Ovary (tissue), 10 donors: ENCODE measurements at regions of chr11 and their contacts with region 1.

Region 1: DNA sequence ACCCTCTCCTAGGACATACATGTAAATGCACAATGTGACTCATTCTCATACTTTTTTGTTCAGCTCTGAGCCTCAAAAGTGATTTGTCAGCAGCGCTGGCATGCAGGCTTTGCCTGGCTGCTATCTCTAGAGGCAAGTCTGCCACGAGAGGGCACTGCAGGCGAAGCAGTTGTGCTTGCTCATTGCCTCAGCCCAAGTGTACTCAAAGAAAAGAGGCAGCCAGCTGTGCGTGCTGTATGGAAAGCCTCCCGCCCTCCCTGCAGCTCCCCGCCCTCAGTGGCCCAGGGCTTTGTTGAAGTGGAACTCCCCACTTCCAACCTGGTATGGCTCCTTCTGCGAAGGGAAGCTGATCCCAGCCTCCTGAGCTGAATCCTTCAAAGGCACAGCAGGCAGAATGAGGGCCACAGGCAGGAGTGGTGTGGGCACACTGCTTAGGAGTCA is 16.3 kb downstream of the SDHAF2 start:
- DNase-seq: peak; percentile 88 to 92 (median 88)
- H3K4me3 ChIP-seq: no peak overlapping the region
- H3K27ac ChIP-seq: no peak overlapping the region
- H3K4me1 ChIP-seq: peaks cover 2% of the 10 kb centered on the region
- H3K27me3 ChIP-seq: no peaks in the 10 kb centered on the region
- CTCF ChIP-seq: peak; percentile 70 to 72 (median 70)
- EP300 ChIP-seq: no peak
- POLR2A ChIP-seq: no peak

Region 2: GRCh38 chr11:61347916-61348461 is 98.2 kb before region 1 on chr11:
- intact Hi-C with region 1: no loop called
- DNase-seq: peak in 1 of 5 donors; percentile 42
- H3K4me3 ChIP-seq: no peak overlapping the region
- H3K27ac ChIP-seq: no peak overlapping the region
- H3K4me1 ChIP-seq: peaks cover 15% of the 10 kb centered on the region
- H3K27me3 ChIP-seq: no peaks in the 10 kb centered on the region
- CTCF ChIP-seq: no peak
- EP300 ChIP-seq: no peak
- POLR2A ChIP-seq: no peak

Region 3: GRCh38 chr11:61488651-61489291 is 42.5 kb after region 1 on chr11:
- intact Hi-C with region 1: no loop called
- DNase-seq: peak; percentile 64 to 79 (median 72)
- H3K4me3 ChIP-seq: no peak overlapping the region
- H3K27ac ChIP-seq: peak overlapping the region in 1 of 2 donors; percentile 21
- H3K4me1 ChIP-seq: peaks cover 18% of the 10 kb centered on the region
- H3K27me3 ChIP-seq: no peaks in the 10 kb centered on the region
- CTCF ChIP-seq: no peak
- EP300 ChIP-seq: no peak
- POLR2A ChIP-seq: no peak

Region 4: GRCh38 chr11:61509043-61510029 is 63.1 kb after region 1 on chr11:
- intact Hi-C with region 1: loop called in 2 of 4 experiments (anchors 10 kb)
- DNase-seq: peak in 1 of 5 donors; percentile 61
- H3K4me3 ChIP-seq: no peak overlapping the region
- H3K27ac ChIP-seq: peak overlapping the region in 1 of 2 donors; percentile 8
- H3K4me1 ChIP-seq: peaks cover 2% of the 10 kb centered on the region
- H3K27me3 ChIP-seq: peaks cover 3% of the 10 kb centered on the region
- CTCF ChIP-seq: peak in 2 of 3 donors; percentile 34 to 45
- EP300 ChIP-seq: no peak
- POLR2A ChIP-seq: no peak

Region 5: GRCh38 chr11:61639816-61640443 is 193.7 kb after region 1 on chr11:
- intact Hi-C with region 1: loop called in 1 of 4 experiments (anchors 10 kb)
- DNase-seq: no peak
- H3K4me3 ChIP-seq: no peak overlapping the region
- H3K27ac ChIP-seq: no peak overlapping the region
- H3K4me1 ChIP-seq: no peaks in the 10 kb centered on the region
- H3K27me3 ChIP-seq: no peaks in the 10 kb centered on the region
- CTCF ChIP-seq: no peak
- EP300 ChIP-seq: no peak
- POLR2A ChIP-seq: no peak